ENCODE measurements at regions of chr1 and their contacts with region 1.

Region 1: GRCh38 chr1:45569962-45570581 is 13.8 kb upstream of the NASP start:
- DNase-seq: no peak
- H3K4me3 ChIP-seq: no peak overlapping the region
- H3K27ac ChIP-seq: peak overlapping the region; percentile 20
- H3K4me1 ChIP-seq: peaks cover 17% of the 10 kb centered on the region
- H3K27me3 ChIP-seq: no peaks in the 10 kb centered on the region
- CTCF ChIP-seq: peak; percentile 87 to 94 (median 90)
- POLR2A ChIP-seq: no peak

Region 2: DNA sequence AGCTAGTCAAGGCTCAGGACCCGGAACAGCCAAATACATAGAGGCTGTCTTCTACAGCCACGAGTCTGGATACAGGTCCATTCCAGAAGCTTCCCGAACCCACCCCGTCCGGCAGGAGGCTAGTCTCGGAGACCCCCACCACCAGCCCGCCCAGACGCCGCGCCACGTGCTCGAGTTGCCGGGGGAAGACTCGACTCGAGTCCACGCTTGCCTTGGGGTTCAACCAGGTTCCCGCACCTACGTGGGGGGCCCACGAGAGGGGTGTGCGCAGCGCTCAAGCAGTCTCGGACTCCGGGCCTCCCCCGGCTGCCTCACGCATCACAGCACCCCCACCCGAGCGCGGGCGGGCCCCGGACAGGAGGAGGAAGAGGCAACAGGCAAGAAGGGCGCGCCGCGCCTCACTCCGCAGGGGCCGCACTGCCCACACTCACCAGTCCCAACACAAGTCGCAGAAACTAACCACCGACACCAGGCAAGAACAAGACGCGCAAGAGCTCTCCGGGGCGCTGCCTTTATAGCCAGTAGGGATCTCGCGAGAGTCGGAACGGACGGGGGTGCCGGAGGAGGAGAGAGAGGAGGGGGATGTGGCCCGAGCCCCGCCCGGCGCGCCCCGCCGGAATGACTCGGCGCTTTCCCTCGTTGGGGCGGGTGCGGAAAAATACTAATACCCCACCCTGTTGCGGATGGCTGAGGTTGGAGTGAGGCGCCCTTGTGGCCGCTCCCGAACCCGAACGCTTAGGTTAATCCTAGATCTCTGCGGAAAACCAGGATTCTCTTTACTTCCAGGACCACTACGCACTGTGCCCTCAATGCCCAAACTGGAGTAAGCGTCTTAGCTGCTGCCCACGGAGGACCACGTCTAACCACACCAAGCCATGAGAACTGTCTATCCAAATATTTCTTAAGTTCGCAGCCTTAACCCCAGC is 48.4 kb before region 1 on chr1 and contains the start of gene PRDX1:
- intact Hi-C with region 1: loop called (anchors 5 kb)
- DNase-seq: peak in 1 of 2 donors; percentile 99
- H3K4me3 ChIP-seq: peak within 1 kb of the TSS; percentile 88 to 95
- H3K27ac ChIP-seq: peak within 1 kb of the TSS; percentile 99
- H3K4me1 ChIP-seq: peaks cover 43% of the 10 kb centered on the region
- H3K27me3 ChIP-seq: no peaks in the 10 kb centered on the region
- CTCF ChIP-seq: peak in 1 of 3 experiments; percentile 10
- POLR2A ChIP-seq: peak; percentile 88 to 99
- total RNA-seq, gene PRDX1: 239 TPM

Measured in vagina (tissue), 2 donors.